Calu3 (cell line): ENCODE measurements at regions of chr11 and their contacts with region 1.

Region 1: DNA sequence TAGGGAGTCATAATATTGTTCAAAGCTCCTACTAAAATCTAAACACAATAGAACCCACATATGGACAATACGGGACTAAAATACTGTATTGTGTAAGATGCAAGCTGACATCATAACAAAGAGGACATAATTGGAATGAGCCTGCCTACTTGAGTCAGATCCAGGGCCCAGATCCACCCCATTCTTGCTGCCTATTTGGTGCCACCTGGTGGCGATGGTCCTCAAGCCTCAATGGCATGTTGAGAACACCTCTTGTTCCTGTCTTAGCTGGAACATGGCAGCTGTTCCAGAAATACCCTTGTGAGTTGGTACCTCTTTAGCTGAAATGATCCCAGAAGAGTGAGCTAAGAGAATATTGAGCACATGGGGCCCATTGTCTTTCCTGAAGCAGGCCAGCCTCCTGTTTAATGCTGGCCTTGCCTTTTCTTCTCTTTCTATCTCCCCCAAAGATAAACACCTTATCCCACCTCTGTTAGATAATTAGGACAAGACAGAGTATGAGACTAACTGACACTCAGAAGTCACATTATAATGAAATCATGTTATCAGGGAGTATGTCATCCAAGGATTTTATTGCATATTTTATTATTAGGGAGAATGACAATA is 680.9 kb upstream of the ANO5 start:
- DNase-seq: peak; percentile 83
- H3K4me3 Mint-ChIP-seq: no peak overlapping the region
- H3K27ac Mint-ChIP-seq: no peak overlapping the region
- H3K4me1 Mint-ChIP-seq: no peaks in the 10 kb centered on the region
- H3K27me3 Mint-ChIP-seq: no peaks in the 10 kb centered on the region
- CTCF ChIP-seq: peak; percentile 66

Region 2: DNA sequence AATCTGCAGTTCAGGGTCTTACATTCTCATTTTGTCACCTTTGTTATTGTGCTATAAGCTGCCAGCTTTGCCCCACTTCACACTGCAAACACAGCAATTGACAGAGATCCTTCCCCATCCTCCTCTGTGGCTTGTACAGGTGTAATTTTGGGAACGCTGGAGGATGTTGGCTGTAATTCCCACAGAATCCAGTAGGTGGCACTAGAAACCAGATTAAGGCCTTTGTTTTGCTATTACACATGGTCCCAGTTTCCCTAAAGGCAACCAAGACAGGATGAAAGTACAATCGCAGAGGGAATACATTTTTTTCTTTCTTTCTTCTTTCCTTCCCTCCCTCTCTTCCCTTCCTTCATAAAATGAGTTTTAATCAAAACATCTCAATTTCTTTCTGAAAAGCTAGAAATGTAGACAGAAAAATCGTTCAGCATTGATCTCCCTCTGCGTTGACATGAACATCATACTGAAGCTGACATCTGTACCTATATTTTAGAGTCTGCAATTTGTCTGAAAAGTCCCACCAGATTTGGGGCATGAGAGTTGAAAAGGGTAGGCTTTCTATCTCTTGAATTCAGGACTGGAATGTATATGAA is 863.9 kb before region 1 on chr11:
- CTCF ChIA-PET with region 1: no interaction called
- intact Hi-C with region 1: loop called (anchors 1 kb)
- DNase-seq: peak; percentile 61
- H3K4me3 Mint-ChIP-seq: no peak overlapping the region
- H3K27ac Mint-ChIP-seq: no peak overlapping the region
- H3K4me1 Mint-ChIP-seq: no peaks in the 10 kb centered on the region
- H3K27me3 Mint-ChIP-seq: peaks cover 22% of the 10 kb centered on the region
- CTCF ChIP-seq: peak; percentile 87

Region 3: DNA sequence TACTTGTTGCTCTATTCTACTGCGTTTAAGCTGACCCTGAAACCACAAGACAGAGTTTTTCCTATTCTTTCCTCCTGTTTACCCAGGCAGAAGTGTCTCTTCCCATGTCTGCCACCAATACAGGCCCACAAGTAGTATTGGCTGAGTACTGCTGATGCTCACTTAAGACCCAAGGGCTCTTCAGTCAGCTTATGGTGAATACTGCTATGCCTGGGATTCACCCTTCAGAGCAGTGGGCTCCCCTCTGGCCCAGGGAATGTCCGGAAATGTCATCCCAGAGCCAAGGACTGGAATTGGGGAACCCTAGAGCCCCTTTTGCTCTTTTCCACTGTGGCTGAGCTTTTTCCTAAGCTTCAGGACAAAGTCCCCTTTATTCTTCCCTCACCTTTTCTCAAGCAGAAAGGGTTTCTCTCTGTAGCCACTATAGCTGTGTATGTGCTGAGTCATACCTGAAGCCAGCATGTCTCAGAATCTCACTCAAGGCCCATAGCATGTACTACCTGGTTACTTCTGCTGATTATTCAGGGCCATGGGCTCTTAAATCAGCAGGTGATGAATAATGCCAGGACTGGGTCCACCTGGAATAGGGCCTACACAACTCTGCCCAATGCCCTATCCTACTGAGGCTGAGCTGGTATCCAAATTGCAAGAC is 64.9 kb before region 1 on chr11:
- CTCF ChIA-PET with region 1: no interaction called
- intact Hi-C with region 1: no loop called
- DNase-seq: no peak
- H3K4me3 Mint-ChIP-seq: no peak overlapping the region
- H3K27ac Mint-ChIP-seq: no peak overlapping the region
- H3K4me1 Mint-ChIP-seq: no peaks in the 10 kb centered on the region
- H3K27me3 Mint-ChIP-seq: no peaks in the 10 kb centered on the region
- CTCF ChIP-seq: no peak